Activated naive CD4-positive, alpha-beta T cell treated with anti-CD3 and anti-CD28 coated beads for 36 hours (primary cell): ENCODE measurements at regions of chr1 and their contacts with region 1.

Region 1: DNA sequence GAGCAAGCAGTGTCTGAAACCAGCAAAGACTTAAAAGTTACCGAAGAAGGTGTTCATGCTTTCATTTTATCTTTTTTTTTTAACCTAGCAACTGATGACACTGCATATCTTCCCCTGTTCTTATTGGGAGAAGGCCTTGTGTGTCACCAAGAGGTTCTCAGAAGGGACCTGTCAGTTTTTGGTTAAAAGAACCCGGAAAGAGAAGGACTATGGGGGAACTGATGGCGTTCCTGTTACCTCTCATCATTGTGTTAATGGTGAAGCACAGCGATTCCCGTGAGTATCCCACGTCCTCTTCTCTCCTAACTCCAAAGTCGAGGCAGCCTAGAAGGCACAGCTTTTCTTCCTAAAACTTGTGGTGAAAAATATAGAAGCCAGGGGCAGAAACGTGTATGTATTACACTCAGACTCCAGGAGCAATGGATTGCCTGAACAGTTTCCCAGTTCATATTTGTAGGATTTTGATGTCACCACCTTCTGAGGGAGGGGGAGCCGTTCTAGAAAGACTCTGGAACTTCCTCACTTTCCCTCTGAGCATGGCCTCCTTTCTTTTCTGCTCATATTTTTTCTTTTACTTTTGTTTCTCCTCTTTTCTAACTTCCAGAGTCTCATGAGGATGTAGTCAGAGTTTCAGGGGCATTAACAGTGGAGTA is at the start of gene MR1:
- DNase-seq: peak; percentile 44
- H3K4me3 Mint-ChIP-seq: peak within 1 kb of the TSS; percentile 91
- H3K27ac Mint-ChIP-seq: peak within 1 kb of the TSS; percentile 100
- H3K4me1 Mint-ChIP-seq: peaks cover 49% of the 10 kb centered on the region
- H3K27me3 Mint-ChIP-seq: no peaks in the 10 kb centered on the region
- total RNA-seq, gene MR1: 22.5 to 25.0 TPM

Region 2: GRCh38 chr1:179954493-179955297 is 1079.2 kb before region 1 on chr1 and contains the start of gene CEP350:
- CTCF ChIA-PET with region 1: no interaction called
- intact Hi-C with region 1: loop called (anchors 5 kb)
- DNase-seq: peak; percentile 99
- H3K4me3 Mint-ChIP-seq: peak within 1 kb of the TSS; percentile 85
- H3K27ac Mint-ChIP-seq: peak within 1 kb of the TSS; percentile 95
- H3K4me1 Mint-ChIP-seq: peaks cover 41% of the 10 kb centered on the region
- H3K27me3 Mint-ChIP-seq: no peaks in the 10 kb centered on the region
- total RNA-seq, gene CEP350: 30.3 to 36.0 TPM

Region 3: GRCh38 chr1:180881806-180882509 is 152.0 kb before region 1 on chr1:
- CTCF ChIA-PET with region 1: interaction called, 7 read pairs
- intact Hi-C with region 1: loop called (anchors 5 kb)
- DNase-seq: no peak
- H3K4me3 Mint-ChIP-seq: no peak overlapping the region
- H3K27ac Mint-ChIP-seq: no peak overlapping the region
- H3K4me1 Mint-ChIP-seq: peaks cover 2% of the 10 kb centered on the region
- H3K27me3 Mint-ChIP-seq: no peaks in the 10 kb centered on the region

Region 4: DNA sequence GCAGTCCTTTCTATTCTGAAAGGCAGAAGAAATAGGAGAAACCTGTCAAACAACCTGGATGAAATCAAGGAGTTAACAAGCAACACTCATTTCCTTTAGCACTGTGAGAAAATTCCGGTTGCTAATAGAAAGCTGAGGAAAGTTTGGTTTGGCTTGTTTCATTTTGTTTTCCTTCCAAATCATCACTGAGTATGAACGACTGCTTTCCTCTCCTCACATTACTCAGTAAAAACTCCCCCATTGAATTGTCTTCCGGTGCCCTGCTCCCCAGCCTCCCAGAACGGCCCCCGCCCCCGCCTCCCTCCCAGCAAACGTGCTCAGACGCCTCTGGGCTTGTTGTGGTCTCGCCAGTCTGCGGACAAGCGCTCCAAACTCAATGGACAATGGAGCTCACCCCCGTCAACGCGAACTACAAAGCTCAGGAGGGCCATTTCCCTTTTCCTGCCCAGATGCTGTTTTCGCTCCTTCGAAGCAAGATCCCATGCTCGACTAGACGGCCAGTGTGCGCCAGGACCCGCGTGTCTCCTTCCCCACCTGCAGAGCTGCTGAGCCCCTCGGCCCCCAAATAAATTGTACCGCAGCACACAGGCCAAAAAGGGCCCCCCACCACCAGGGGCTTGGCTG is 12.0 kb before region 1 on chr1:
- CTCF ChIA-PET with region 1: interaction called, 18 read pairs
- intact Hi-C with region 1: loop called (anchors 1 kb)
- DNase-seq: peak; percentile 78
- H3K4me3 Mint-ChIP-seq: peak overlapping the region; percentile 86
- H3K27ac Mint-ChIP-seq: peak overlapping the region; percentile 94
- H3K4me1 Mint-ChIP-seq: peaks cover 35% of the 10 kb centered on the region
- H3K27me3 Mint-ChIP-seq: no peaks in the 10 kb centered on the region

Region 5: GRCh38 chr1:181099152-181100014 is 65.5 kb after region 1 on chr1:
- CTCF ChIA-PET with region 1: interaction called, 6 read pairs
- intact Hi-C with region 1: loop called (anchors 1 kb)
- DNase-seq: peak; percentile 80
- H3K4me3 Mint-ChIP-seq: peak overlapping the region; percentile 67
- H3K27ac Mint-ChIP-seq: peak overlapping the region; percentile 99
- H3K4me1 Mint-ChIP-seq: peaks cover 88% of the 10 kb centered on the region
- H3K27me3 Mint-ChIP-seq: no peaks in the 10 kb centered on the region

Region 6: DNA sequence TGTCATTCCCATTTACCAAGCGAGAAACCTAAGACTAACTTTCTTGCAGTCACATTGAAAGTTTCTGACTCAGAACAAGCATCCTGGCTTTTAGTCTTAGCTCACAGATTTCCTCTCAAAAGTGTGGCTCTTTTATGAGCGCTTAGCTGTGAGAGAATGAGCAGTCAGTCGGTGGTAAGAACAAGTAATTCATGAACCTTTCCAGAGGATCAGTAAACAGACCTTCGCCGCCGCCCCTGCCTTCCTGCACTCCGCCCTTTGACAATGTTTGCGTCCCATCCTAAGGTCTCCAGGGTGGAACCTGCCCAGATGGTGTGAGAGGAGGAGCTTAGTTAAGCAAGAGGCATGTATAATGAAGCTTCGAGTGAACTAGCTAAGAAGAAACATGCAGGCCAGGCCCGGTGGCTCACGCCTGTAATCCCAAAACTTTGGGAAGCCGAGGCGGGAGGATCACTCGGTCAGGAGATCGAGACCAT is 1215.3 kb after region 1 on chr1:
- CTCF ChIA-PET with region 1: no interaction called
- intact Hi-C with region 1: loop called (anchors 10 kb)
- DNase-seq: peak; percentile 83
- H3K4me3 Mint-ChIP-seq: no peak overlapping the region
- H3K27ac Mint-ChIP-seq: peak overlapping the region; percentile 75
- H3K4me1 Mint-ChIP-seq: peaks cover 24% of the 10 kb centered on the region
- H3K27me3 Mint-ChIP-seq: no peaks in the 10 kb centered on the region